Vagina (tissue), 2 donors: ENCODE measurements at regions of chr20 and their contacts with region 1.

Region 1: GRCh38 chr20:33862709-33863403 is 51.7 kb downstream of the CHMP4B start:
- DNase-seq: no peak
- H3K4me3 ChIP-seq: peak overlapping the region in 1 of 2 donors; percentile 6
- H3K27ac ChIP-seq: no peak overlapping the region
- H3K4me1 ChIP-seq: peaks cover 21% of the 10 kb centered on the region
- H3K27me3 ChIP-seq: no peaks in the 10 kb centered on the region
- CTCF ChIP-seq: peak in 2 of 3 experiments; percentile 38 to 50
- POLR2A ChIP-seq: no peak

Region 2: GRCh38 chr20:33963751-33964150 is 100.9 kb after region 1 on chr20:
- intact Hi-C with region 1: no loop called
- DNase-seq: no peak
- H3K4me3 ChIP-seq: no peak overlapping the region
- H3K27ac ChIP-seq: no peak overlapping the region
- H3K4me1 ChIP-seq: no peaks in the 10 kb centered on the region
- H3K27me3 ChIP-seq: no peaks in the 10 kb centered on the region
- CTCF ChIP-seq: no peak
- POLR2A ChIP-seq: no peak

Region 3: GRCh38 chr20:34069341-34070078 is 206.7 kb after region 1 on chr20:
- intact Hi-C with region 1: loop called (anchors 5 kb)
- DNase-seq: no peak
- H3K4me3 ChIP-seq: no peak overlapping the region
- H3K27ac ChIP-seq: peak overlapping the region; percentile 3
- H3K4me1 ChIP-seq: peaks cover 53% of the 10 kb centered on the region
- H3K27me3 ChIP-seq: no peaks in the 10 kb centered on the region
- CTCF ChIP-seq: peak; percentile 64 to 91 (median 87)
- POLR2A ChIP-seq: no peak

Region 4: DNA sequence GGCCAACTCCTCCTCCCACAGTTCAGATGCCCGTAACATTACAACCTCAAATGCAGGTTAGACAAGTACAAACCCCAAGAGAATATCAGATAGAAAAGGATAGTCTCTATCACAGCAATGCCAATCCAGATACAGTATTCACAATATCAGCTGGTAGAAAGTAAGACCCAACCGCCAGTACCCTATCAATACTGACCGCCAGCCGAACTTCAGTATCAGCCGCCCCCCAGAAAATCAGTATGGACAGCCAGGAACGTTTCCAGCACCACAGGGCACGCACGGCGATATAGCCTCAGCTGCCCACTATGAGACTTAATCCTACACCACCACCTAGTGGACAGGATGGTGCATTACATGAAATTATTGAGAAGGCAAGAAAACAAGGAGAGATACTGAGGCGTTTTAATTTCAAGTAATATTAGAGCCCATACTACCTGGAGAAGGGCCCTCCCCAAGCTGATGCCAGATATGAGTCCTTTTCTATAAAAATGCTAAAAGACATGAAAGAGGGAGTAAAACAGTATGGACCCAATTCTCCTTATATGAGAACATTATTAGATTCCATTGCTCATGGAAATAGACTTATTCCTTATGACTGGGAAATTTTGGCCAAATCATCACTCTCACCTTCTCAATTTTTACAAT is 266.8 kb after region 1 on chr20:
- intact Hi-C with region 1: loop called (anchors 5 kb)
- DNase-seq: no peak
- H3K4me3 ChIP-seq: no peak overlapping the region
- H3K27ac ChIP-seq: no peak overlapping the region
- H3K4me1 ChIP-seq: peaks cover 5% of the 10 kb centered on the region
- H3K27me3 ChIP-seq: no peaks in the 10 kb centered on the region
- CTCF ChIP-seq: peak; percentile 83 to 90 (median 85)
- POLR2A ChIP-seq: no peak